ENCODE measurements at regions of chr2 and their contacts with region 1.

Region 1: DNA sequence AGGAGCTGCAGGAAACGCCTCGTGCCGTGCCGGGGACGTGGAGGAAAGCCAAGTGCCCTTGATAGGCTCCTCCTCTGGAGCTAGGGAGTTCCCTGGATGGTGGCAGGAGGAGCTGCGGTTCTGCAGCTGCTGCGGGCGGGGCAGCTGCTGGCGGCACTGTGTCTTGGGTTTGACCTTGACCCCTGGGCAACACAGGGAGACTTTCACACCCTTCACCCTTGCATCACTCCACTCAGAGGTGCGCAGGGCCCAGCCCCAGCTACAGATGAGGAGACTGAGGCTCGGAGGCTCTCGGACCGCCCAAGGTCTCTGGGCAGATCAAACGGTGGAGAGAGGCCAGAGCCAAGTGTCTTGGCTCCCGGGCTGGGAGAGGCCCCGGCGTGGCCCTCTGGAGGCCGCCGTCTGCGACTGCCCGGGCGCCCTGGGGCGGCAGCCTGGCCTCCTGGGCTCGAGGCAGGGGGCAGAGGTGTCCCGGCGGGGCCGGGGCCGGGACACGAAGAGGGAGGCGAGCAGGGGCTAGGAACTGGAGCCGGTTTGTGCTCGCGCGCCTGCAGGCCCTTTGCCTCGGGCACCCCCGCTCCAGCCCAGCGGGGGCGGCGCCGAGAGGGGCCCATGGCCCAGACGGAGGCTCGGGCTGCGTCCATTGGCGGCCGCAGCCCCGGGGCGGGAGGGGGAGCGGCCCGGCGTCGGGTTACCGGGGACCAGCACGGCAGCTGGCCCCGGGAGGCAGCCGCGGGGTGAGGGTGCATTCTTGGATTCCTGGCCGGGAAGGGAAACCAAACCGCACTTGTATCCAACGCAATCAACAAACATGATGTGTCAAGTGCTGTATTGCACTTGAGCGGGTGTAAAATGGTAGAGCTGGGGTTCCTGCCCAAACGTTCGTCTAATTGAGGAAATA is 129.6 kb upstream of the SLC1A4 start:
- DNase-seq: peak; percentile 89 to 90
- ATAC-seq: peak; percentile 82 to 91 (median 84)
- H3K4me3 ChIP-seq: peak overlapping the region; percentile 22 to 62 (median 53)
- H3K27ac ChIP-seq: peak overlapping the region; percentile 84 to 99 (median 94)
- H3K4me1 ChIP-seq: peaks cover 23 to 91% (median 37%) of the 10 kb centered on the region in 9 donors
- H3K27me3 ChIP-seq: no peaks in the 10 kb centered on the region
- CTCF ChIP-seq: peak in 1 of 9 donors; percentile 11

Region 2: DNA sequence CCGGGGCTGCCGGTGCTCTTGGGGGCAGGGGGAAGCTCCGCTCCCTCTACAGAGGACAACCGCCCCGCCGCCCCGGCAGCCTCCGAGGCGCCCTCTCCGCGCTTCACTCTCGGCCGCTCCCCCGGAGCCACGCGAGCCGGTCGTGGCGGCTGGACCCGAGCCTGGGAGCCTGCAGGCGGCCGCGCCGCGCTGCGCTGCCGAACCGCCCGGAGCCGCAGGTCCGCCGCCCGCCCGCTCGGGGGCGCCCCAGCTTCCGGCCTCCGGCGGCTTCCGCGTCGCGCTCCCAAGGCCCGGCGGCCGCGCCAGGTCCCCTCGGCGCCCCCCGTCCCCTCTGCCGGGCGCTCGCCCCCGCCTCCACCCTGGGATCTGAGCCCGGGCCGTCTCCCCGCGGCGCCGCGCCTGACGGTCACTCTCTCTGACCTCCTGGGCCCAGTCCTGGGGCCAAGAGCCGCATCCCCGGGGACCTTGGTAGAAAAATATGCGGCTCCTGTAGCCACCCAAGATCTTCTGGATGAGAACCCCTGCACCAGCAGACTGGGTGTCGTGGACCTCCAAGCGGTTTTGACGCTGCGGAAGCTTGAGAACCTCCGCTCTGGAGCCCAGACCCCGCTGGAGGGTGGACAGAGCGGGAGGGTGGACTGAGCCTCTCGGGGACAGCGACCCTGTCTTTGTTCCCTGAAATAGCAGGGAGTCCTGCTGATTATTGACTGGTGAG is 250.2 kb before region 1 on chr2:
- intact Hi-C with region 1: loop called in 1 of 10 experiments (anchors 5 kb)
- DNase-seq: peak; percentile 44 to 77
- ATAC-seq: peak; percentile 46 to 85 (median 72)
- H3K4me3 ChIP-seq: peak overlapping the region; percentile 47 to 79 (median 66)
- H3K27ac ChIP-seq: peak overlapping the region in 9 of 10 donors; percentile 66 to 92 (median 83)
- H3K4me1 ChIP-seq: peaks cover 0 to 34% (median 15%) of the 10 kb centered on the region in 9 donors
- H3K27me3 ChIP-seq: no peaks in the 10 kb centered on the region
- CTCF ChIP-seq: peak in 6 of 9 donors; percentile 18 to 72 (median 52)

Region 3: GRCh38 chr2:64653349-64654062 is 206.1 kb before region 1 on chr2 and contains the start of gene SERTAD2:
- intact Hi-C with region 1: loop called in 4 of 10 experiments (anchors 2 to 5 kb)
- DNase-seq: peak; percentile 90 to 92
- ATAC-seq: peak; percentile 89 to 93 (median 92)
- H3K4me3 ChIP-seq: peak within 1 kb of the TSS; percentile 65 to 99 (median 87)
- H3K27ac ChIP-seq: peak within 1 kb of the TSS; percentile 92 to 100 (median 99)
- H3K4me1 ChIP-seq: peaks cover 0 to 75% (median 57%) of the 10 kb centered on the region in 9 donors
- H3K27me3 ChIP-seq: no peaks in the 10 kb centered on the region
- CTCF ChIP-seq: peak in 6 of 9 donors; percentile 4 to 31 (median 24)
- total RNA-seq, gene SERTAD2: 11.3 to 20.9 (median 16.6) TPM

Region 4: GRCh38 chr2:64787702-64788101 is 71.9 kb before region 1 on chr2:
- intact Hi-C with region 1: no loop called
- DNase-seq: no peak
- ATAC-seq: peak in 1 of 8 donors; percentile 41
- H3K4me3 ChIP-seq: no peak overlapping the region
- H3K27ac ChIP-seq: no peak overlapping the region
- H3K4me1 ChIP-seq: no peaks in the 10 kb centered on the region
- H3K27me3 ChIP-seq: no peaks in the 10 kb centered on the region
- CTCF ChIP-seq: no peak

Region 5: GRCh38 chr2:65017335-65017734 is 157.8 kb after region 1 on chr2:
- intact Hi-C with region 1: no loop called
- DNase-seq: peak in 1 of 2 donors; percentile 20
- ATAC-seq: peak in 6 of 8 donors; percentile 43 to 85 (median 72)
- H3K4me3 ChIP-seq: peak overlapping the region in 1 of 10 donors; percentile 1
- H3K27ac ChIP-seq: peak overlapping the region in 5 of 10 donors; percentile 23 to 80 (median 58)
- H3K4me1 ChIP-seq: peaks cover 0 to 30% (median 11%) of the 10 kb centered on the region in 9 donors
- H3K27me3 ChIP-seq: no peaks in the 10 kb centered on the region
- CTCF ChIP-seq: peak; percentile 5 to 67 (median 46)